ENCODE measurements at regions of chr3 and their contacts with region 1.

Region 1: GRCh38 chr3:10192953-10193691 is 28.4 kb downstream of the IRAK2 start:
- DNase-seq: peak; percentile 18 to 67 (median 42)
- H3K4me3 ChIP-seq: peak overlapping the region; percentile 34
- H3K4me3 Mint-ChIP-seq: peak overlapping the region; percentile 67 to 88 (median 84)
- H3K27ac ChIP-seq: peak overlapping the region; percentile 74
- H3K27ac Mint-ChIP-seq: peak overlapping the region; percentile 98 to 99 (median 98)
- H3K4me1 ChIP-seq: peaks cover 91% of the 10 kb centered on the region
- H3K4me1 Mint-ChIP-seq: peaks cover 76 to 84% (median 79%) of the 10 kb centered on the region in 3 donors
- H3K27me3 ChIP-seq: no peaks in the 10 kb centered on the region
- H3K27me3 Mint-ChIP-seq: no peaks in the 10 kb centered on the region

Region 2: GRCh38 chr3:10140996-10141546 is 52.1 kb before region 1 on chr3:
- CTCF ChIA-PET with region 1: interaction called, 3 read pairs
- POLR2A ChIA-PET with region 1: interaction called, 12 read pairs
- DNase-seq: peak in 1 of 5 donors; percentile 2
- H3K4me3 ChIP-seq: peak overlapping the region; percentile 74
- H3K4me3 Mint-ChIP-seq: peak overlapping the region; percentile 83 to 99 (median 90)
- H3K27ac ChIP-seq: peak overlapping the region; percentile 90
- H3K27ac Mint-ChIP-seq: peak overlapping the region in 7 of 8 donors; percentile 82 to 98 (median 93)
- H3K4me1 ChIP-seq: peaks cover 30% of the 10 kb centered on the region
- H3K4me1 Mint-ChIP-seq: peaks cover 29 to 37% (median 35%) of the 10 kb centered on the region in 3 donors
- H3K27me3 ChIP-seq: no peaks in the 10 kb centered on the region
- H3K27me3 Mint-ChIP-seq: no peaks in the 10 kb centered on the region

Region 3: DNA sequence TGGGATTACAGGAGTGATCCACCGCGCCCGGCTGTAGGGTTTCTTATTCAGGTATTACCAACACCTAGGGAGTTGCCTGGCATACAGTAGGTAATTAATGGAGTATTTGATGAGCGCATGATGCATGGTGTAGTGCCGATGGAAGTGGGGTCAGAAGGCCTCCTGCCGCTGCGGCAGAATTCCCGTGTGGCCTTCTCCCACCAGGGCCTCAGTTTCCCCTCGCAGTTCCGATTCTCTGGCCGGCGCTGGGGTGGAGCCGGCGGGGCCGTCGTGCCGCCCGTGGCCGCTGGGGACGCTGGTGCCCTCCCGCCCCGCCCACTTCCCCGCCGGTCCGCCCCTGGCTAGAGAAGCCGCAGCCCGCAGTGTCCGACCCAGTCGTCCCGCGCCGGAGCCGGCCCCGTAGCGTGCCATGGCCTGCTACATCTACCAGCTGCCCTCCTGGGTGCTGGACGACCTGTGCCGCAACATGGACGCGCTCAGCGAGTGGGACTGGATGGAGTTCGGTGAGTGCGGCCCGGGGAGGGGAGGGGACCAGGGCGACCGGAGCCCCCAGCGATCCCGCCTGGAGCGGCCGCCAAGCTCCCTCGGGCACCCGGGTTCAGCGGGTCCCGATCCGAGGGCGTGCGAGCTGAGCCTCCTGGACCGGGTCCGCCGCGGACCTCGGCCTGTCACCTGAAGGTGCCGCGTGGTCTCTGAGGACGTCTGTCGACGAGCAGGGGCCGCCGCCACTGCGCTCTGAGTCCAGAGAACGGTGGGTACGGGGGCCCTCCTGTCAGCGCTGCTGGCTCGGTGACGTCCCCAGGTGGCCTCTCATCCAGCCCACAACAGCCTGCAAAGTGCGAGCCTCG is 28.4 kb before region 1 on chr3 and contains the start of gene IRAK2:
- CTCF ChIA-PET with region 1: interaction called, 14 read pairs
- POLR2A ChIA-PET with region 1: no interaction called
- DNase-seq: peak; percentile 51 to 72 (median 58)
- H3K4me3 ChIP-seq: peak within 1 kb of the TSS; percentile 70
- H3K4me3 Mint-ChIP-seq: peak within 1 kb of the TSS; percentile 81 to 93 (median 89)
- H3K27ac ChIP-seq: peak within 1 kb of the TSS; percentile 53
- H3K27ac Mint-ChIP-seq: peak within 1 kb of the TSS; percentile 51 to 89 (median 85)
- H3K4me1 ChIP-seq: peaks cover 8% of the 10 kb centered on the region
- H3K4me1 Mint-ChIP-seq: peaks cover 14 to 26% (median 23%) of the 10 kb centered on the region in 3 donors
- H3K27me3 ChIP-seq: no peaks in the 10 kb centered on the region
- H3K27me3 Mint-ChIP-seq: no peaks in the 10 kb centered on the region
- total RNA-seq, gene IRAK2: 5.0 to 5.1 TPM

Region 4: GRCh38 chr3:10224784-10225665 is 31.9 kb after region 1 on chr3:
- CTCF ChIA-PET with region 1: interaction called, 16 read pairs
- POLR2A ChIA-PET with region 1: interaction called, 9 read pairs
- DNase-seq: peak; percentile 39 to 76 (median 54)
- H3K4me3 ChIP-seq: no peak overlapping the region
- H3K4me3 Mint-ChIP-seq: peak overlapping the region in 6 of 7 donors; percentile 56 to 77 (median 64)
- H3K27ac ChIP-seq: no peak overlapping the region
- H3K27ac Mint-ChIP-seq: peak overlapping the region; percentile 57 to 96 (median 90)
- H3K4me1 ChIP-seq: peaks cover 26% of the 10 kb centered on the region
- H3K4me1 Mint-ChIP-seq: peaks cover 52 to 68% (median 59%) of the 10 kb centered on the region in 3 donors
- H3K27me3 ChIP-seq: no peaks in the 10 kb centered on the region
- H3K27me3 Mint-ChIP-seq: no peaks in the 10 kb centered on the region